CD14-positive monocyte (primary cell): ENCODE measurements at regions of chr15 and their contacts with region 1.

Region 1: GRCh38 chr15:30991255-30992072 is at the start of gene MTMR10:
- DNase-seq: peak; percentile 72 to 77 (median 73)
- H3K4me3 ChIP-seq: peak within 1 kb of the TSS; percentile 87 to 100 (median 99)
- H3K4me3 Mint-ChIP-seq: peak within 1 kb of the TSS; percentile 93
- H3K27ac ChIP-seq: peak within 1 kb of the TSS; percentile 98 to 99
- H3K27ac Mint-ChIP-seq: peak within 1 kb of the TSS; percentile 96 to 98 (median 97)
- H3K4me1 ChIP-seq: peaks cover 15 to 28% of the 10 kb centered on the region in 2 donors
- H3K4me1 Mint-ChIP-seq: peaks cover 22% of the 10 kb centered on the region
- H3K27me3 ChIP-seq: no peaks in the 10 kb centered on the region
- H3K27me3 Mint-ChIP-seq: peaks cover 0 to 3% (median 2%) of the 10 kb centered on the region in 3 donors
- CTCF ChIP-seq: no peak
- polyA plus RNA-seq, gene MTMR10: 8.7 to 23.3 (median 15.9) TPM

Region 2: GRCh38 chr15:30889196-30889595 is 102.3 kb before region 1 on chr15:
- intact Hi-C with region 1: no loop called
- DNase-seq: no peak
- H3K4me3 ChIP-seq: no peak overlapping the region
- H3K4me3 Mint-ChIP-seq: no peak overlapping the region
- H3K27ac ChIP-seq: no peak overlapping the region
- H3K27ac Mint-ChIP-seq: no peak overlapping the region
- H3K4me1 ChIP-seq: no peaks in the 10 kb centered on the region
- H3K4me1 Mint-ChIP-seq: peaks cover under 1% of the 10 kb centered on the region
- H3K27me3 ChIP-seq: no peaks in the 10 kb centered on the region
- H3K27me3 Mint-ChIP-seq: peaks cover 2% of the 10 kb centered on the region in 3 donors
- CTCF ChIP-seq: no peak

Region 3: DNA sequence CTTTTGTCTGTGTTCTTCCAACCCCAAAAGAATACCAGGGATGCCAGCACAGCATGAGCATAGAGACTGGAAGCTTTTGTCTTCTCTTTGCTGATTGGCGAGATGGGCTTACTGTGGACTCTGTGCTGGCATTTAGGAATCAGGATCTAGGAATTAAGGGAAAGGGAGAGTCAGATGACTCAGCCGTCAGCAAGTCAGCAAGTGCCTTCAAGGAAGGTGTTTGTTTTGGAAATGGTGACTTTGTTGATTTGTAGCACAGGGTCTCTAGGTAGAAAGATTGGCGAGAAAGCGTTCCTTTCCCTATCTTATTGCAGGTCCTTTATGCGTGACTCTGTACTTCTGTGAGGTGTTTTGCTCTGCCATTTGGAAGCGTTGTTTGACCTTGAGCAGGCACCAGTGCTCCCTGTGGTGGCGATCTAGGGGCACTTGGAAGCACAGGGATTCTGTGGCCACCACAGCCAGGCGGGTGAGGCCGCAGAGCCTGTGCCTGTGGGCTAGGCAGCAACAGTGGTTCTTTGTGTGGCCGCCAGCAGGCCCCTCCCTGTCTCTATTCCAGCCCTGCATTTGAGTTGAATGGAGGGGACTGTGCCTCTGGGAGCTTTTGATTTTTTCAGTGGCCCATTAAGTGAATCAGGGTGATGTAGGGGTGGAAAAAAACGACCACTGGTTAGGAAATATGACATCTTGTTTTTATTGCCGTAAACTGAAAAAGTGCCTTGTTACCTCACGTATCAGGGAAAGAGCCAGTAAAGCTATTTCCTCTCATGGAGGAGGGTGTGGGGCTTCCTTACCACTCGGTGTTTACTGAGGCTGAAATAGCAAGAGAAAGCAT is 68.8 kb before region 1 on chr15:
- intact Hi-C with region 1: no loop called
- DNase-seq: no peak
- H3K4me3 ChIP-seq: no peak overlapping the region
- H3K4me3 Mint-ChIP-seq: no peak overlapping the region
- H3K27ac ChIP-seq: no peak overlapping the region
- H3K27ac Mint-ChIP-seq: peak overlapping the region in 1 of 7 donors; percentile 46
- H3K4me1 ChIP-seq: no peaks in the 10 kb centered on the region
- H3K4me1 Mint-ChIP-seq: no peaks in the 10 kb centered on the region
- H3K27me3 ChIP-seq: no peaks in the 10 kb centered on the region
- H3K27me3 Mint-ChIP-seq: no peaks in the 10 kb centered on the region
- CTCF ChIP-seq: no peak

Region 4: GRCh38 chr15:31049682-31050615 is 58.5 kb after region 1 on chr15:
- intact Hi-C with region 1: loop called in 1 of 2 experiments (anchors 10 kb)
- DNase-seq: peak; percentile 53 to 66 (median 62)
- H3K4me3 ChIP-seq: peak overlapping the region in 1 of 3 experiments; percentile 48
- H3K4me3 Mint-ChIP-seq: peak overlapping the region; percentile 58 to 78
- H3K27ac ChIP-seq: peak overlapping the region; percentile 52 to 78
- H3K27ac Mint-ChIP-seq: peak overlapping the region; percentile 83 to 94 (median 88)
- H3K4me1 ChIP-seq: peaks cover 50 to 52% of the 10 kb centered on the region in 2 donors
- H3K4me1 Mint-ChIP-seq: peaks cover 76% of the 10 kb centered on the region
- H3K27me3 ChIP-seq: no peaks in the 10 kb centered on the region
- H3K27me3 Mint-ChIP-seq: no peaks in the 10 kb centered on the region
- CTCF ChIP-seq: no peak